Esophagus squamous epithelium (tissue), 5 donors: ENCODE measurements at regions of chr11 and their contacts with region 1.

Region 1: DNA sequence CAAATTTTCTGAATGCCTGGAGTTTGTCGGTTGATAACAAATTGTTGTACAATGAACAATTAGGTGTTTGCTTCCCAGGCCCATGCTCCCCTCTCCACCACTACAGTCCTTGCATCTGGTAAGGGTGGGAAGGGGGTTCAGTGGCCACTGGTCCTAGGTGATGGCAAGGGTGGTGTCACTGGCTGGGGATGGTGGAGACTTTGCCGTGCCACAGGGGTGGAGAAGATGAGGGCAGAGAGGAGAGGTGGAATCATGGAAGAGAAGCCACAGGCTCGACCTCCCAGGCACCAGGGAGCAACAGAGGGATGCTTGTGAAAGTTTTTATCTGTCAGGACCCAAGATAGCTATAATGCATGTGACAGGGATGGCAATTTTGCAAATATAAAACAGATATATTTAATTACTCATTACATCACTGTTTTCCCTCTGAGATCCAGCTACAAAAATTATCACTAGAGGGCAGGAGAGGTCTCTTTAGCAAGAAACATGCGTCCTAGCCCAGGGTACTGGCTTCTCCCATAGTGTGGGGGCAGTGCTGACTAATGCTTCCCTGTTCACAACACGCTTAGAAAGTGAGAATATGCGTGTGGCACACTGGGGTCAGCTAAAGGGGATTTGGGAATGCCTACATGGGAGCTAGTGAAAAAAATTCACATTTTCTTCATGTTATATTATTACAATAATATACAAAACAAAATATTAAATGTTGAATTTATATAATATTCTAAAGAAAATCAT is 49.0 kb upstream of the AMPD3 start:
- DNase-seq: no peak
- H3K4me3 ChIP-seq: no peak overlapping the region
- H3K27ac ChIP-seq: peak overlapping the region in 3 of 4 donors; percentile 62 to 79 (median 66)
- H3K4me1 ChIP-seq: peaks cover 14 to 32% (median 14%) of the 10 kb centered on the region in 3 donors
- H3K27me3 ChIP-seq: no peaks in the 10 kb centered on the region
- CTCF ChIP-seq: peak; percentile 62 to 85 (median 74)
- POLR2A ChIP-seq: no peak

Region 2: GRCh38 chr11:10653926-10654810 is 248.1 kb after region 1 on chr11:
- intact Hi-C with region 1: loop called (anchors 10 kb)
- DNase-seq: no peak
- H3K4me3 ChIP-seq: no peak overlapping the region
- H3K27ac ChIP-seq: peak overlapping the region; percentile 84 to 90 (median 88)
- H3K4me1 ChIP-seq: peaks cover 43 to 97% (median 85%) of the 10 kb centered on the region in 3 donors
- H3K27me3 ChIP-seq: no peaks in the 10 kb centered on the region
- CTCF ChIP-seq: peak; percentile 49 to 74 (median 60)
- POLR2A ChIP-seq: no peak

Region 3: GRCh38 chr11:10735481-10736475 is 329.8 kb after region 1 on chr11:
- intact Hi-C with region 1: loop called (anchors 5 kb)
- DNase-seq: peak; percentile 79
- H3K4me3 ChIP-seq: peak overlapping the region; percentile 2 to 43 (median 28)
- H3K27ac ChIP-seq: peak overlapping the region; percentile 70 to 84 (median 80)
- H3K4me1 ChIP-seq: peaks cover 2 to 32% (median 14%) of the 10 kb centered on the region in 3 donors
- H3K27me3 ChIP-seq: no peaks in the 10 kb centered on the region
- CTCF ChIP-seq: peak; percentile 95 to 100 (median 99)
- POLR2A ChIP-seq: no peak